ENCODE measurements at regions of chr18 and their contacts with region 1.

Region 1: DNA sequence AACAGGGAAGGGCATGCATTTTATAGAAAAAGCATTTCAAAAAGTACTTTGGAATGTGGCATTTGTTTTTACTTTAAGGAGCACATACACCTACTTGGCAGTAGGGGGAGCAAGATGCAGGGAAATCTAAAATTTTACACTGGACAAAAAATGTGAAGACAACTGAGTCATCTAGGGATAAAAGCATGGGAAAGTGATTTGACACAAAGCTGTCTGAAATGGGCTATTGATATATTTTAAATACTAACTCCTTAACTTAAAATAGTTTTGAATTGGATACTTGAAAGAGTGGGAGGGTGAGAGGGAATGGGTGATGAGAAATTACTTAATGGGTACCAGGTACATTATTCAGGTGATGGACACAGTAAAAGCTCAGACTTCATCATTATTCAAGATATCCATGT is 15.8 kb downstream of the TMEM200C start:
- DNase-seq: peak; percentile 4
- H3K4me3 ChIP-seq: no peak overlapping the region
- H3K27me3 ChIP-seq: no peaks in the 10 kb centered on the region
- CTCF ChIP-seq: peak; percentile 79

Region 2: GRCh38 chr18:5890331-5891183 is 11.1 kb after region 1 on chr18:
- CTCF ChIA-PET with region 1: interaction called, 23 read pairs
- POLR2A ChIA-PET with region 1: no interaction called
- DNase-seq: no peak
- H3K4me3 ChIP-seq: no peak overlapping the region
- H3K27me3 ChIP-seq: peaks cover 12% of the 10 kb centered on the region
- CTCF ChIP-seq: no peak

Region 3: GRCh38 chr18:6219116-6219717 is 339.7 kb after region 1 on chr18:
- CTCF ChIA-PET with region 1: interaction called, 30 read pairs
- POLR2A ChIA-PET with region 1: no interaction called
- DNase-seq: no peak
- H3K4me3 ChIP-seq: no peak overlapping the region
- H3K27me3 ChIP-seq: no peaks in the 10 kb centered on the region
- CTCF ChIP-seq: peak; percentile 90

Region 4: DNA sequence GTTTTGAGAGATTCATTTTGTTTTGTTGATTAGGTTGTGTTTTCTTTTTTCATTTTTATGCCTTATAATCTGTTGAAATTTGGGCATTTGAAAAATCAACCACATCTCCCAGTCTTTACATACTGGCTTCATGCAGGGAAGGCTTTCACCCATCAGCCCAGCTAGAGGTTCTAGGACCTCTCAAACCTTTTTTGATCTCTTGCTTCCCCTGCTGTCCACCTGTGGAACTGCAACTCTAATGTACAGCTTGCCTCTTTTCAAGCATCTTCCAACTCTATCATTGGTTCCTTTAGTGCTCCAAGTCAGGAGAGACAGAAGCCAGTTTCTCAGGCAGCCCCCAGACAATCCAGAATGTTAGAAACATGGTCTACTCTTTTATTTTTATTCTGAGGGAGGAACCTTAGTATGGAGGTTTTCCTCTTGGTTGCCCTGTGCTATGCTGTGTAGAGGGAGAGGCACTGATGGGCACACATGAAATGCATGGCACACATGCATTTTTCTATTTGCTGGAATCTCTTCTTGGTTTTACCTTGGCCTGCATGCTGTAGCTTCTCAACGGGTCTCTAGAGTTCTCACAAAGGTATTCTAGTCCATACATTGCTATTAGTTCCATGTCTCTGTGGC is 642.4 kb after region 1 on chr18:
- CTCF ChIA-PET with region 1: interaction called, 34 read pairs
- POLR2A ChIA-PET with region 1: no interaction called
- DNase-seq: no peak
- H3K4me3 ChIP-seq: no peak overlapping the region
- H3K27me3 ChIP-seq: no peaks in the 10 kb centered on the region
- CTCF ChIP-seq: peak; percentile 90

Measured in BJ (cell line).